Sigmoid colon (tissue), 7 donors: ENCODE measurements at regions of chr6 and their contacts with region 1.

Region 1: DNA sequence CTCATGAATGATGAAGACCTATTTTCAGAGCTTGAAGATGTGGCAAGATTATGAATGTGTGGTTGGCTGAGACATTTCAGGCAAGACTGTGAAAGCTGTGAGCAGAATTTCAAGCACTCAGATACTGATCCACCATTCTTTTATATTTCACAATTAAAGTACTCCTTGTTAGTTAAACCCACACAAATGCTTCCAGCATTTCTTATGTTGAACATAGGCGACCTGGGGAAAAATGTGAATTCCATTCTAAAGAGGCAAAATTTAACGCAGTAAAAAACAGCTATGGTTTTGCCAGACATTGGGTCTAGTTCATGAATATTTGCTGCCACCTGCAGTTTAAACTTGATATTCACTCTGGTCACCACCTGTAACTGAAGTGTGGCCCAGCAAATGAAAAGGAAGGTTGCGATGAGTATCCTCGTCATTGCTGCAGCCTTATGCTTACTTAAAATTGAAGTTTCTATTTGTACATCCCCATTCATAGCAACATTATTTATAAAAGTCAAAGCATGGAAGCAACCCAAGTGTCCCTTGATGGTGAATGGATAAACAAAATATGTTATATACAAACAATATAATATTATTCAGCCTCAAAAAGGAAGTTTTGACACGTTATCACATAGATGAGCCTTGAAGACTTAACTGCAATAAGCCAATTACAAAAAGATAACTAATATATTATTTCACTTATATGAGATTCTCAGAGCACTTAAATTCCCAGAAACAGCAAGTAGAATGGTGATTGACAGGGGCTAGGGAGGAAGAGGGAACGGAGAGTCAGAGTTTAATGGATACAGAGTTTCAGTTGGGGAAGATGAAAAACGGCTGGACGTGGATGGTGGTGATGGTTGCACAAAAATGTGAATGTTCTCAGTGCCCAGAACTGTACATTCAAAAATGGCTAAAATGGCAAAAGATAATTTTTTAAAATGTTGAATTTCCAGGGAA is 32.4 kb upstream of the FAM184A start:
- DNase-seq: no peak
- H3K4me3 ChIP-seq: no peak overlapping the region
- H3K27ac ChIP-seq: no peak overlapping the region
- H3K4me1 ChIP-seq: peaks cover 0 to 13% (median 2%) of the 10 kb centered on the region in 4 donors
- H3K27me3 ChIP-seq: no peaks in the 10 kb centered on the region
- CTCF ChIP-seq: peak; percentile 31 to 61 (median 56)
- EP300 ChIP-seq: no peak
- POLR2A ChIP-seq: no peak

Region 2: DNA sequence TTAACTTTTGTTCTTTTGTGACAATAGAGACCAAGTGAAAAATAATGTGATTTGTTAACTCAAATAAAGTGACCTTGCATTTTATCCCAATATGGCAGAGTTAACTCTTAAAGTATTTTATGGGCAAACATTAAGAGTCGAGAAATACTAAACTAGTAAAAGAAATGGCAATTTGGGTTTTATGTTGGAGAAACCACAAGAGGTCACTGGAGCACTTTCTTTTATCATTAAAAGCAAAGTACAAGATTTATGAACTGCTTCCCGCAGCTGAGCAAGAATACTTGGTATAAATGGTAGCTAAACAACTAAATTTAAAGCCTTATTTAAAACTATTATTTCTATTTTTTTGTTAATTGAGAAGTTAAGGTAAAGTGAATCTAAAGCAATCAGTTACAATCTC is 142.5 kb before region 1 on chr6:
- intact Hi-C with region 1: loop called (anchors 2 kb)
- DNase-seq: no peak
- H3K4me3 ChIP-seq: no peak overlapping the region
- H3K27ac ChIP-seq: no peak overlapping the region
- H3K4me1 ChIP-seq: no peaks in the 10 kb centered on the region
- H3K27me3 ChIP-seq: no peaks in the 10 kb centered on the region
- CTCF ChIP-seq: peak in 3 of 4 experiments; percentile 14 to 22 (median 16)
- EP300 ChIP-seq: no peak
- POLR2A ChIP-seq: no peak